ENCODE measurements at regions of chr9 and their contacts with region 1.

Region 1: GRCh38 chr9:89602978-89603766 is 1.6 kb upstream of the GADD45G start:
- DNase-seq: no peak
- H3K4me3 ChIP-seq: no peak overlapping the region; the same call in 1 of the 2 replicates
- H3K27me3 ChIP-seq: peaks cover 3% of the 10 kb centered on the region
- CTCF ChIP-seq: peak; percentile 90

Region 2: DNA sequence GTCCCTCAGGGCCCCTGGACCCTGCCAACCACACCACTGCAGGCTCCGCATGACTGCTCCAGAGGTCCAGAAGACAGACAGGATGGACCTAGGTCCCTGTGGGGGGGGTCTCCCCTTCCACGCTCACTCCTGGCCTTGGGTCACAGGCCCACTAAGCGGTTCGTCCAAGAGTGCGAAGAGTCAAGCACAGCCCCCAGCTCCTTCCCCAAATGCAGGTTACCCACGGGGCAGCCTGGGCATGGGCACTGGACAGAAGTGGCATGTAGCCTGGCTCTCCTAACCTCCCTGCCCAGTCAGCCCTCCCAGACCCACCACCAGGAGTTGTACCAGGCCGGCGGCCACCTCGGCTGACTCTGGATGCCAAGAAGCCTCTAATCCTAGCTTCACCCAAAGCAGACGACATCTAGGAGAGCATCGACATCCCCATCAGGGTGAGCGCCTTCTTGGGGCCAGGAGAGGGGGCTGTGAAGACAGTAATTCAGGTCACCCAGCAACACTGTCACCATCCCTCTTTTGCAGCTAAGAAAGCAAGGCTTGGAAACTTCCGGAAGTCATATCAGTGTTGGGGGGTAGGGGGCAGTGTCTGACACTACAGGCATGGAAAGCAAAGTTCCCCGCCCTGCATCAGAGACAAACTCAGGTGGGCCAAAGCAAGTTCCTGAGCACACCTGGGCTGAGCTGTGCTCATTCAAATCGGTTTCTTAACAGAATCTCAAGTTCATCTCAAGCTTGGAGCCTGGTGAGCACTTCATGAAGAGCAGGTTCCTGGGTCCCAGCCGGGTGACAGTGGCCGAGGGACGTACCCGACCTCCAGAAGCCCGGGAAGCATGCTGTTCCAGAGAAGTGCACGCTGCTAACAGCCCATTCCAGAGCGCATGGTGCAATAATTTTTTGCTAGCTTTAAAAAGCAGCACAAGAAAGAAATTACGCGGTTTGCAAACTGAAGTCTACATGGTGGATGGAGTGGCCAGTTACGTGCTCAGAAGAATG is 174.0 kb before region 1 on chr9:
- CTCF ChIA-PET with region 1: no interaction called
- POLR2A ChIA-PET with region 1: no interaction called
- DNase-seq: no peak
- H3K4me3 ChIP-seq: no peak overlapping the region
- H3K27me3 ChIP-seq: no peaks in the 10 kb centered on the region; the same call in 1 of the 2 replicates
- CTCF ChIP-seq: no peak

Region 3: DNA sequence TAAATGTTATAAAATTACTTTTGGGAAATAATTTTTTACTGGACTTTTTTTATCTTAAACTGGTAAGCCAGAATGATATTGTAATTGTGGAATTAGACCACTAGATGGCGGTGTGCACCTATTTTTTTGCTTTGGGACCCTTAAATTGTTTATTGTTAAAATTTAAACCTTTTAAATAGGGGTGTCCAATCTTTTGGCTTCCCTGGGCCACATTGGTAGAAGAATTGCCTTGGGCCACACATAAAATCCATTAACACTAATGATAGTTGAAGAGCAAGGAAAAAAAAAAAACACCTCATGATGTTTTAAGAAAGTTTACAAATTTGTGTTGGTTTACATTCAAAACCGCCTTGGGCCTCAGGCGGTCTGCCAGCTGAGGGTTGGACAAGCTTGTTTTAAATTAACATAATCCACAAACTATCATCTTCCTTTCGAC is 26.8 kb before region 1 on chr9:
- CTCF ChIA-PET with region 1: interaction called, 11 read pairs
- POLR2A ChIA-PET with region 1: no interaction called
- DNase-seq: no peak
- H3K4me3 ChIP-seq: no peak overlapping the region
- H3K27me3 ChIP-seq: no peaks in the 10 kb centered on the region; the same call in 1 of the 2 replicates
- CTCF ChIP-seq: peak; percentile 57

Region 4: DNA sequence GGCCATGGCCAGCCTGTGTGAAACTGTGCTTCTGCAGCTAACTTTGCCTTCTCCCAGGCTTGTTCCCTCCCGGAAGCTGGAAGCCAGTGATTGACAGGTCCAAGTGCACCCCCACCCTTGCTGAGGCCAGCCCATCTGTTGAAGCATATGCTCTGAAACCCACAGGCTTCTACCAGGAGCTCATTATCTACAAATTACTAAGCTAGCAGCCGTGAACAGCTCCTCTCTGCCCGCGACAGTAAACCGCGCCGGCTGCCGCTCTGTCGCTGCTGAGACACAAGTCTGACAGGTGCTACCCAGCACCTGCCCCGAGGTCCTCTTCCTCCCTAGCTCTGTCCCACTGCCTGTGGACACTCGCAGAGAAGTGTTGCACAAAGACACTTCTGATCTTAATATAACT is 492.5 kb after region 1 on chr9:
- CTCF ChIA-PET with region 1: interaction called, 166 read pairs
- POLR2A ChIA-PET with region 1: no interaction called
- DNase-seq: no peak
- H3K4me3 ChIP-seq: no peak overlapping the region
- H3K27me3 ChIP-seq: no peaks in the 10 kb centered on the region
- CTCF ChIP-seq: no peak

Region 5: GRCh38 chr9:90102292-90102901 is 499.2 kb after region 1 on chr9:
- CTCF ChIA-PET with region 1: interaction called, 166 read pairs
- POLR2A ChIA-PET with region 1: no interaction called
- DNase-seq: peak; percentile 19
- H3K4me3 ChIP-seq: no peak overlapping the region
- H3K27me3 ChIP-seq: no peaks in the 10 kb centered on the region
- CTCF ChIP-seq: peak; percentile 73